H1 (cell line): ENCODE measurements at regions of chr14 and their contacts with region 1.

Region 1: GRCh38 chr14:90461425-90461824 is 64.6 kb downstream of the CALM1 start:
- DNase-seq: no peak
- H3K4me3 ChIP-seq: no peak overlapping the region
- H3K27ac ChIP-seq: no peak overlapping the region
- H3K4me1 ChIP-seq: no peaks in the 10 kb centered on the region
- H3K27me3 ChIP-seq: no peaks in the 10 kb centered on the region
- CTCF ChIP-seq: peak; percentile 28 to 61 (median 55)
- EP300 ChIP-seq: no peak
- POLR2A ChIP-seq: no peak
- RAD21 ChIP-seq: peak in 1 of 2 experiments; percentile 48; a peak in 2 of 4 replicates

Region 2: DNA sequence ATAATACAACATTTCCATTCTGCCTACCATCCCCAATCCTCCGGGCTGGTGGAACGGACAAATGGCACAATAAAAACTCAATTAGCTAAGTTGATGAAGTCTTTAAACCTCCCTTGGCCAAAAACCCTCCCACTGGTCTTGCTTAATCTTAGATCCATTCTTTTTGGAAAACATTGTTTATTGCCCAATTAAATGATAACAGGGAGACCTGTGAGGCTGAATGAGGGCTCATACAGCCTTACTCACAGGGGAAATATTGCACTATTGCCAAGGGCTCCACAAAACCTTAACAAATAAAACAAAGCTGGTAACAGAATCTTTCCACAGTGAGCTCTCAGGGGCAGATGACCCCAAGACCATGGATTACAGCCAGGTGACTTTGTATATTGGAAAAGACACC is 212.8 kb before region 1 on chr14:
- CTCF ChIA-PET with region 1: no interaction called
- POLR2A ChIA-PET with region 1: no interaction called
- DNase-seq: no peak
- H3K4me3 ChIP-seq: no peak overlapping the region
- H3K27ac ChIP-seq: no peak overlapping the region
- H3K4me1 ChIP-seq: no peaks in the 10 kb centered on the region
- H3K27me3 ChIP-seq: no peaks in the 10 kb centered on the region; a peak in 2 of 7 replicates
- CTCF ChIP-seq: no peak
- EP300 ChIP-seq: no peak
- POLR2A ChIP-seq: no peak
- RAD21 ChIP-seq: no peak

Region 3: DNA sequence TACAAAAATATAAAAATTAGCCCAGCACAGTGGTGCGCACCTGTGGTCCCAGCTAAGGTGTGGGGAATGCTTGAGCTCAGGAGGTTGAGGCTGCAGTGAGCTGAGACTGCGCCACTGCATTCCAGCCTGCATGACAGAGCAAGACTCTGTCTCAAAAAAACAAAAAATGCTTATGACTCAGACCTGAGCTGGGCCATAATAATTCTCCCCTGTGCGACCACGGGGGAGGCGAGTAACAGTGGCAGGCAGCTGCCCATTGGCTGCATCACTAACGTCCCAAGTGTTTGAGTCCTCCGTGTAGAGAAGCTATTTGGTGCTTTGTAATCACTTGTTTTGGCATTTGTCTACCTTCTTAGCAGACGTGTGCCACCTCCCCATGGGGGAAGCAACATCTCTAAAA is 180.2 kb before region 1 on chr14:
- CTCF ChIA-PET with region 1: interaction called, 11 read pairs
- POLR2A ChIA-PET with region 1: no interaction called
- DNase-seq: no peak
- H3K4me3 ChIP-seq: no peak overlapping the region
- H3K27ac ChIP-seq: no peak overlapping the region
- H3K4me1 ChIP-seq: no peaks in the 10 kb centered on the region
- H3K27me3 ChIP-seq: no peaks in the 10 kb centered on the region
- CTCF ChIP-seq: no peak
- EP300 ChIP-seq: no peak
- POLR2A ChIP-seq: no peak
- RAD21 ChIP-seq: no peak

Region 4: DNA sequence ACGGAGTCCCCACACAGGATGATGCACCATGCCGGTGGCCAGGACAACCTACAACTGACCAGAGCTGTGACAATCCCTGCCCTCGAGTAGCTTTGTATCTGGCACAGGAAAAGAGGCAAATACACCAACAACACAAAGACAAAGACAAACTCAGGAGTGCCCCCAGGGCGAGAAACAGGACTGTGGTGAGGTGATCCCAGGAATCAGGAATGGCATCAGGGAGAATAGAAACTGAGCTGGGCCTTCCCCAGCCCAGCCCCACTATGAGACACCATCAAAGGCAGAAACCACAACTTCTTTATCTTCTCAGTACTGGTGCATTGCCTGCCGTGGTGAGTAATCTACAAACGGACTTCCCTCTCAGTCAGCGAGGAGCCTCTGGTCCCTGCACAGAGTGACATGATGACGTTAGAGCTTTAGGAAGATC is 197.1 kb after region 1 on chr14:
- CTCF ChIA-PET with region 1: no interaction called
- POLR2A ChIA-PET with region 1: no interaction called
- DNase-seq: peak in 1 of 2 experiments; percentile 30
- H3K4me3 ChIP-seq: no peak overlapping the region
- H3K27ac ChIP-seq: no peak overlapping the region
- H3K4me1 ChIP-seq: peaks cover 6 to 12% (median 9%) of the 10 kb centered on the region in 4 experiments
- H3K27me3 ChIP-seq: no peaks in the 10 kb centered on the region
- CTCF ChIP-seq: no peak
- EP300 ChIP-seq: no peak
- POLR2A ChIP-seq: no peak
- RAD21 ChIP-seq: no peak